MCF 10A (cell line): ENCODE measurements at regions of chr11 and their contacts with region 1.

Region 1: GRCh38 chr11:61446211-61446651 is 16.3 kb downstream of the SDHAF2 start:
- DNase-seq: peak; percentile 91
- H3K4me3 Mint-ChIP-seq: no peak overlapping the region
- H3K27ac Mint-ChIP-seq: no peak overlapping the region
- H3K4me1 Mint-ChIP-seq: no peaks in the 10 kb centered on the region
- H3K27me3 Mint-ChIP-seq: no peaks in the 10 kb centered on the region
- CTCF ChIP-seq: peak; percentile 79

Region 2: GRCh38 chr11:61378713-61379313 is 67.4 kb before region 1 on chr11:
- CTCF ChIA-PET with region 1: no interaction called
- POLR2A ChIA-PET with region 1: no interaction called
- intact Hi-C with region 1: no loop called
- DNase-seq: peak; percentile 94
- H3K4me3 Mint-ChIP-seq: no peak overlapping the region
- H3K27ac Mint-ChIP-seq: peak overlapping the region; percentile 86
- H3K4me1 Mint-ChIP-seq: peaks cover 13% of the 10 kb centered on the region
- H3K27me3 Mint-ChIP-seq: no peaks in the 10 kb centered on the region
- CTCF ChIP-seq: no peak

Region 3: DNA sequence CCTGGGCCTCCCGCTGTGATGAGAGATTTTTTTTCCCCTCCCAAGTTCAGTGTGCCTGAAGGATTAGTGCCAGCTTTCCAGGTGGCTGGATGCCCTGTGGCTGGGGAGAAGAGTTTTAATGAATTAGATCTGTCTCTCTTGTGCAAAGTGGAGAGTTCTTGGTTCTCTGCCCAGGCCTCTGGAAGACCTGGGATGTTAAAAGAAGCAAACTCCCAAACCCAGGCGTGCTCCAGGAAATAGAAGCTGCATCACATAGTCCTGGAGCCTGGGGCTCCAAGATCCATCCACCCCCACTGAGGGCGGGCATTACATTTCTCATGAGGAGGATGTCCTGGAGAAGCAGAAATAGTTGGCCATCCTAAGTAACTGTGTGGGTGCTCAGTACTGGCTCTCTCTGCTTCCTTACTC is 14.2 kb after region 1 on chr11:
- CTCF ChIA-PET with region 1: interaction called, 32 read pairs
- POLR2A ChIA-PET with region 1: interaction called, 4 read pairs
- intact Hi-C with region 1: no loop called
- DNase-seq: no peak
- H3K4me3 Mint-ChIP-seq: no peak overlapping the region
- H3K27ac Mint-ChIP-seq: no peak overlapping the region
- H3K4me1 Mint-ChIP-seq: no peaks in the 10 kb centered on the region
- H3K27me3 Mint-ChIP-seq: no peaks in the 10 kb centered on the region
- CTCF ChIP-seq: no peak

Region 4: DNA sequence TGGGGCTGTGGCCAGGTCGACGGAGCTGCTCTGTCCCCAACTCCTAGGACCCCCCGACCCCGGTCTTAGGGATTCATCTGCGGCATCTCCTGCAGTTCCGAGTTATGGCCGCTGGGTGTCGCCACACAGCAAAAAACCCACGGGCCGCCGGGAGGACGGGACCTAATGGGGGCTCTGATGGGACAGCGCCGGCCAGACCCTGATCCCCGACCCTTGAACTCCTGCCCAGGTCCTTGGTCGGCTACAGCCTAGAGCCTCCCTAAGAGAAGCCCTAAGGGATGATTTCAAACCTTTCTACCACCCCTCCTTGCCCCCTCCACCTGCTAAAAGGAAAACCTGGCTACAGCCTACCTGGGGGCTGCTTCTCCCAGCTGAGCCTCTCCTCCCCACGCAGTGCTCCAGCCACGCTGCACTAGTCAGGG is 31.5 kb after region 1 on chr11:
- CTCF ChIA-PET with region 1: interaction called, 66 read pairs
- POLR2A ChIA-PET with region 1: interaction called, 3 read pairs
- intact Hi-C with region 1: no loop called
- DNase-seq: peak; percentile 27
- H3K4me3 Mint-ChIP-seq: no peak overlapping the region
- H3K27ac Mint-ChIP-seq: no peak overlapping the region
- H3K4me1 Mint-ChIP-seq: peaks cover 9% of the 10 kb centered on the region
- H3K27me3 Mint-ChIP-seq: no peaks in the 10 kb centered on the region
- CTCF ChIP-seq: peak; percentile 88

Region 5: GRCh38 chr11:61516675-61517572 is 70.7 kb after region 1 on chr11:
- CTCF ChIA-PET with region 1: interaction called, 49 read pairs
- POLR2A ChIA-PET with region 1: no interaction called
- intact Hi-C with region 1: loop called (anchors 1 kb)
- DNase-seq: peak; percentile 30
- H3K4me3 Mint-ChIP-seq: no peak overlapping the region
- H3K27ac Mint-ChIP-seq: no peak overlapping the region
- H3K4me1 Mint-ChIP-seq: no peaks in the 10 kb centered on the region
- H3K27me3 Mint-ChIP-seq: no peaks in the 10 kb centered on the region
- CTCF ChIP-seq: peak; percentile 99

Region 6: DNA sequence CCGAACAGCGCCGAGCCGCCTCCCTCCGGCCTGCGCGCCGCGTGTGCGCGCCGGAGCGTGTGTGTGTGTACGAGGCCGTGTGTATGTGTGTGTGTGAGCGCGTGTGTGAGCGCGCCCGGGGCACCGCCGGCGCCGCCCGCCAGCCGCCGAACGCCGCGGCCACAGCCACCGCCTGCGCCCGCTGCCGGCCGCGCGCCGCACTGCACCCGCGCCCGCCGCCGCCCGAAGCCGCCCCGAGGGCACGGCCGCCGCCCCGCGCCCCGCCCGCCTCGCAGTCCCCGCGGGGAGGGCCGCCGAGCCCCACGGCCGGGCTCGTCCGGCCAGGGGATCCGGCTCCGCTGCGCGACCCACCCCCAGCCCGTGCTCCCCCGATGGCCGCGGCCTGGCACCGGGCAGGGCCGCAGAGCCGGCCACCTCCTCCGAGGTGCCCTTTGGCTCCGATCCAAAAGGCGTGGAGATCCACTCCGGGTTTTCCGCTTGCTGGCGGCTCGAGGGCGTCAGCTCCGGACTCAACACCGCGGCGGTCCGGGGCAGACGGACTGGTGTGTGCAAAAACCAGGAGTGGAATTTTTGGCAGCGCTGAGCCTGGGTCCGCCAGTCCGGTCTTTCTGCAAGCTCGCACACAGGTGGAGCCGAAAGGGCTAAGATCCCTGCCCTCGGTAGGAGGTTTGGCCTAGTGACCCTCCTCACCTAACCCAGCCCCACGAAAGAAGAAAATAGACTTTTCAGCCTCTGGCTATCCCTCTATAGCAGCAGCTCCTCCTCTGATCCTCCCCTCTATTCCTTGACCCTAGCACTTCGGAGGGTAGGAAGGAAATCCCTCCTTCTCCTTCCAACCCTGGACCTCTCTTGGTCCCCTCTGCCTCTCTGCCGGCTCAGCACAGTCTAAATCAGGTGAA is 135.0 kb after region 1 on chr11 and contains the start of gene SYT7:
- CTCF ChIA-PET with region 1: no interaction called
- POLR2A ChIA-PET with region 1: no interaction called
- intact Hi-C with region 1: loop called (anchors 5 kb)
- DNase-seq: peak; percentile 95
- H3K4me3 Mint-ChIP-seq: peak within 1 kb of the TSS; percentile 71
- H3K27ac Mint-ChIP-seq: no peak within 1 kb of the TSS
- H3K4me1 Mint-ChIP-seq: peaks cover 12% of the 10 kb centered on the region
- H3K27me3 Mint-ChIP-seq: no peaks in the 10 kb centered on the region
- CTCF ChIP-seq: no peak
- total RNA-seq, gene SYT7: 25.2 and 57.7 TPM in 2 replicates

Region 7: GRCh38 chr11:61639816-61640443 is 193.7 kb after region 1 on chr11:
- CTCF ChIA-PET with region 1: interaction called, 161 read pairs
- POLR2A ChIA-PET with region 1: interaction called, 5 read pairs
- intact Hi-C with region 1: loop called (anchors 1 kb)
- DNase-seq: no peak
- H3K4me3 Mint-ChIP-seq: no peak overlapping the region
- H3K27ac Mint-ChIP-seq: no peak overlapping the region
- H3K4me1 Mint-ChIP-seq: no peaks in the 10 kb centered on the region
- H3K27me3 Mint-ChIP-seq: peaks cover 27% of the 10 kb centered on the region
- CTCF ChIP-seq: no peak

Region 8: GRCh38 chr11:61654397-61654829 is 208.2 kb after region 1 on chr11:
- CTCF ChIA-PET with region 1: no interaction called
- POLR2A ChIA-PET with region 1: no interaction called
- intact Hi-C with region 1: no loop called
- DNase-seq: no peak
- H3K4me3 Mint-ChIP-seq: no peak overlapping the region
- H3K27ac Mint-ChIP-seq: no peak overlapping the region
- H3K4me1 Mint-ChIP-seq: peaks cover 5% of the 10 kb centered on the region
- H3K27me3 Mint-ChIP-seq: peaks cover 46% of the 10 kb centered on the region
- CTCF ChIP-seq: no peak